Esophagus muscularis mucosa (tissue), 4 donors: ENCODE measurements at regions of chr1 and their contacts with region 1.

Region 1: GRCh38 chr1:19341201-19342072 is 29.3 kb downstream of the SLC66A1 start:
- DNase-seq: no peak
- H3K4me3 ChIP-seq: no peak overlapping the region
- H3K27ac ChIP-seq: peak overlapping the region; percentile 32 to 64 (median 46)
- H3K4me1 ChIP-seq: peaks cover 9 to 57% (median 43%) of the 10 kb centered on the region in 4 donors
- H3K27me3 ChIP-seq: no peaks in the 10 kb centered on the region
- CTCF ChIP-seq: peak; percentile 82 to 93 (median 86)
- EP300 ChIP-seq: no peak
- POLR2A ChIP-seq: no peak

Region 2: DNA sequence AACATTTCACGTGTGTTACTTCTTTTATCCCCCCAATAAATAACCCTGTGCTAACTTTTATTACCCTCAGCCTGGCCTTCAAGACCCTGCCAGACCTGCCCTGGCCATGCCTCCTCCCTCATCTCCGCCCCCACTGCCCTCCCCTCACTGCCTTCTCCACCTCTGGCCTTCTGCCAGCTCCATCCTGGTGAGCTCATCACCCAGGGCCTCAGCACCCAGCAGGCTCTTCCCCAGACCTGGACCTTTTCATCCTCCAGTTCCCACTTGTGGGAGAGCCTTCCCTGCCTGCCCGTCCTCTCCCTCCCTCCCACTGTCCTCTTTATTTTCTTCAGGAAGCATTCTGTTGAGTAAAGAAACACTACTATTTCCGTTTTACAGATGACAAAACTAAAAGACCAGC is 42.7 kb after region 1 on chr1:
- intact Hi-C with region 1: loop called (anchors 5 kb)
- DNase-seq: no peak
- H3K4me3 ChIP-seq: no peak overlapping the region
- H3K27ac ChIP-seq: peak overlapping the region; percentile 3 to 97 (median 70)
- H3K4me1 ChIP-seq: peaks cover 39 to 69% (median 55%) of the 10 kb centered on the region in 4 donors
- H3K27me3 ChIP-seq: no peaks in the 10 kb centered on the region
- CTCF ChIP-seq: no peak
- EP300 ChIP-seq: no peak
- POLR2A ChIP-seq: no peak

Region 3: DNA sequence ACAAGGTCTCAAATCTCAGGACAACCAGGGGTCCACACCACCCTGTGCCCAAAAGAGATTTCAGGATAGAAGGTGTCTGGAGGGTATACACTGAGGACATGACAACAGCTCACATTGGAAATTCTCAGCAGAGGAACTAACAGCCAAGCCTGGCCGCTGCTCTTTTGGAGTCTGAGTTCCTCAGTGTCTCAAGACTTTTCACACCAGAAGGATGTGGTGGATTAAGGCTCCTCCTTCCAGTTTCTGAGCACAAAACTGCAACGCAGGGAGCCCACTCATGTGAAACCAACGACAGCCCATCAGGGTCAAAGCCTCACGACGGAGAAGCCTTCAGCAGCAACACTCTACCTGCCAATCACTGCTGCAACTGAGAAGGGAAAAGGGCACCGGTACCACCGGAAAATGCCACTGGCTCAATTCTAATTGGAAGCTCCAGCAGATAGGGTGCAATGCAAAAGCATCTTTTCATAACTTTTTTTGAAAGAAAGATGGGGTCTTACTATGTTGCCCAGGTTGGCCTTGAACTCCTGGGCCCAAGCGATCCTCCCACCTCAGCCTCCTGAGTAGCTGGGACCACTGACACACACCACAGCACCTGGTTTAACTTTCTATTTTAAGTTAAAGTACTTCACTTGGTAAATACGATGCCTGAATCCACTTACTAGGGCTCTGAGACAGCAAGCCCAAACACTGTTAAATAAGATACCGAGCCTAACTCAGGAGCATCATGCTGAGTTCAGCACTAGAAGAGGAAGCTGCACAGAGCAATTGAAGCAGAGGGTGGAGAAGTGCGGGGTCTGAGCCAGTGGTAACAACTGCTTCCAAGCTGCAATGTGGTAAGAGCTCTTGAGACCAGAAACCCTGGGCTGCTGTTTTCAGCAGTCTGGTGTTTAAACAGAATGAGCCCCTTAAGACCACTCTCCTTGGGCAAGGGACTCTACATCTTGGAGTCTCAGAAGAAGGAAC is 136.1 kb after region 1 on chr1:
- intact Hi-C with region 1: loop called (anchors 5 kb)
- DNase-seq: no peak
- H3K4me3 ChIP-seq: peak overlapping the region in 1 of 4 donors; percentile 16
- H3K27ac ChIP-seq: peak overlapping the region; percentile 49 to 100 (median 83)
- H3K4me1 ChIP-seq: peaks cover 82 to 100% (median 99%) of the 10 kb centered on the region in 4 donors
- H3K27me3 ChIP-seq: no peaks in the 10 kb centered on the region
- CTCF ChIP-seq: no peak
- EP300 ChIP-seq: no peak
- POLR2A ChIP-seq: no peak

Region 4: GRCh38 chr1:19651141-19651737 is 309.8 kb after region 1 on chr1:
- intact Hi-C with region 1: loop called (anchors 2 kb)
- DNase-seq: no peak
- H3K4me3 ChIP-seq: peak overlapping the region; percentile 1 to 25 (median 6)
- H3K27ac ChIP-seq: peak overlapping the region; percentile 97 to 99 (median 98)
- H3K4me1 ChIP-seq: peaks cover 74 to 99% (median 97%) of the 10 kb centered on the region in 4 donors
- H3K27me3 ChIP-seq: no peaks in the 10 kb centered on the region
- CTCF ChIP-seq: peak; percentile 58 to 71 (median 71)
- EP300 ChIP-seq: no peak
- POLR2A ChIP-seq: no peak